ENCODE measurements at regions of chr6 and their contacts with region 1.

Region 1: GRCh38 chr6:97110626-97111025 is 172.4 kb downstream of the MMS22L start:
- DNase-seq: no peak
- ATAC-seq: no peak
- H3K4me3 Mint-ChIP-seq: no peak overlapping the region
- H3K27ac Mint-ChIP-seq: no peak overlapping the region
- H3K4me1 Mint-ChIP-seq: peaks cover 27% of the 10 kb centered on the region
- H3K27me3 Mint-ChIP-seq: no peaks in the 10 kb centered on the region

Region 2: DNA sequence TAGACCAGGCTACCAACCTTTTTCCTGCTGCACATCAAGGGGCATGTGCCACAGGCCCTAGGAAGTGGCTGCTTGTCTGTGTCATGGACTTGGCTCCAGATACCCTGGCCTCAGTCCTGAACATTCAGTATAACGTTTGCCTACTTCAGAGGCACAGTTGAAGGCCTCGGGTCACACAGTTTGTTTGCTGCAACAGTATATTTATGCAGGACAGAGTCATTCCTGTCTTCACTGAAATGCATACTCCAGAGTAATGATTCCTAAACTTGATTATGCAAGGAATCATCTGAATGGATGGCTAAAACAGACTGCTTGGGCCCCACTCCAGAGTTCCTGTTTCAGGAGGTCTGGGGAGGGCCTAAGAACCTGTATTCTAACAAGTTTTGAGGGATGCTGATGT is 36.7 kb before region 1 on chr6:
- CTCF ChIA-PET with region 1: no interaction called
- POLR2A ChIA-PET with region 1: no interaction called
- intact Hi-C with region 1: loop called in 1 of 2 experiments (anchors 2 kb)
- DNase-seq: no peak
- ATAC-seq: no peak
- H3K4me3 Mint-ChIP-seq: no peak overlapping the region
- H3K27ac Mint-ChIP-seq: no peak overlapping the region
- H3K4me1 Mint-ChIP-seq: no peaks in the 10 kb centered on the region
- H3K27me3 Mint-ChIP-seq: no peaks in the 10 kb centered on the region

Region 3: GRCh38 chr6:97160280-97160679 is 49.7 kb after region 1 on chr6:
- CTCF ChIA-PET with region 1: no interaction called
- POLR2A ChIA-PET with region 1: no interaction called
- intact Hi-C with region 1: no loop called
- DNase-seq: no peak
- ATAC-seq: no peak
- H3K4me3 Mint-ChIP-seq: no peak overlapping the region
- H3K27ac Mint-ChIP-seq: no peak overlapping the region
- H3K4me1 Mint-ChIP-seq: no peaks in the 10 kb centered on the region
- H3K27me3 Mint-ChIP-seq: no peaks in the 10 kb centered on the region

Region 4: DNA sequence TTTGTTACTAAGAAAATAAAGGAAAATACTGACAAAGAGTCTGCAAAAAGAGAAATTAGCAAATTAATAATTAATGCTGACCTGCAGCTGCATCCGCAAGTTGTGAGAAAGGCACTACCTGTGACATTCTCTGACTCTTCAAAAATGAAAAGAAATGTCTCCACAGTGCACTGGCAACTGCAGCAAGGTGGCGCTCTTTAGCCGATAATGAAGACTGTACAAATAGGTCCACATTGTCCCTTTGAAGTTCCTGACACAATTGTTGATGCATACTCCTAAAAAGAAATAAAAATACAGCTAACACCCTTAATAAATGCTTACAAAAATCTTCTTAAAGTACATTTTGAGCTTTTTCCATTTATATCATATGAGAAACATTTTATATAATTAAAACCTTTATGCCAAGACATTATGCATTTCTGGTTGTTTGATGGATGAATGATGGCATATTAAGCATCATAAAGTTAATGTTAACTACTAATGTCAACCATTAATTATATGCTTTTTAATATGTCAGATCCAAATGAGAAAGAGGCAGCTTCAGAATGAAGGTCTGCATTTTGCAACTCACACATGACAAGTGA is 75.9 kb after region 1 on chr6:
- CTCF ChIA-PET with region 1: no interaction called
- POLR2A ChIA-PET with region 1: no interaction called
- intact Hi-C with region 1: no loop called
- DNase-seq: peak; percentile 80
- ATAC-seq: peak; percentile 80
- H3K4me3 Mint-ChIP-seq: no peak overlapping the region
- H3K27ac Mint-ChIP-seq: no peak overlapping the region
- H3K4me1 Mint-ChIP-seq: no peaks in the 10 kb centered on the region
- H3K27me3 Mint-ChIP-seq: no peaks in the 10 kb centered on the region

Measured in activated CD4-positive, alpha-beta T cell treated with anti-CD3 and anti-CD28 coated beads for 36 hours (primary cell).